Naive thymus-derived CD4-positive, alpha-beta T cell (primary cell): ENCODE measurements at regions of chr12 and their contacts with region 1.

Region 1: GRCh38 chr12:102119674-102120563 is at the starts of genes NUP37 and PARPBP:
- DNase-seq: peak; percentile 87 to 94 (median 91)
- ATAC-seq: peak; percentile 98
- H3K4me3 ChIP-seq: peak within 1 kb of the TSS; percentile 93
- H3K4me3 Mint-ChIP-seq: peak within 1 kb of the TSS; percentile 88 to 98 (median 93)
- H3K27ac ChIP-seq: peak within 1 kb of the TSS; percentile 91
- H3K27ac Mint-ChIP-seq: peak within 1 kb of the TSS; percentile 86 to 97 (median 92)
- H3K4me1 ChIP-seq: peaks cover 9 to 14% of the 10 kb centered on the region in 2 donors
- H3K4me1 Mint-ChIP-seq: peaks cover 14 to 49% (median 27%) of the 10 kb centered on the region in 7 donors
- H3K27me3 ChIP-seq: no peaks in the 10 kb centered on the region
- H3K27me3 Mint-ChIP-seq: no peaks in the 10 kb centered on the region
- total RNA-seq, gene NUP37: 11.9 to 47.5 (median 18.5) TPM
- total RNA-seq, gene PARPBP: 1.1 to 21.5 (median 1.5) TPM

Region 2: GRCh38 chr12:100200463-100201181 is 1919.3 kb before region 1 on chr12 and contains the start of gene ACTR6:
- CTCF ChIA-PET with region 1: no interaction called
- POLR2A ChIA-PET with region 1: no interaction called
- intact Hi-C with region 1: loop called (anchors 2 to 10 kb)
- DNase-seq: peak; percentile 91 to 99 (median 97)
- ATAC-seq: peak; percentile 93
- H3K4me3 ChIP-seq: peak within 1 kb of the TSS; percentile 84
- H3K4me3 Mint-ChIP-seq: peak within 1 kb of the TSS; percentile 95 to 99 (median 98)
- H3K27ac ChIP-seq: peak within 1 kb of the TSS; percentile 95
- H3K27ac Mint-ChIP-seq: peak within 1 kb of the TSS; percentile 98 to 100 (median 99)
- H3K4me1 ChIP-seq: peaks cover 10 to 27% of the 10 kb centered on the region in 2 donors
- H3K4me1 Mint-ChIP-seq: peaks cover 17 to 56% (median 44%) of the 10 kb centered on the region in 7 donors
- H3K27me3 ChIP-seq: no peaks in the 10 kb centered on the region
- H3K27me3 Mint-ChIP-seq: no peaks in the 10 kb centered on the region
- total RNA-seq, gene ACTR6: 24.1 to 46.8 (median 34.6) TPM

Region 3: DNA sequence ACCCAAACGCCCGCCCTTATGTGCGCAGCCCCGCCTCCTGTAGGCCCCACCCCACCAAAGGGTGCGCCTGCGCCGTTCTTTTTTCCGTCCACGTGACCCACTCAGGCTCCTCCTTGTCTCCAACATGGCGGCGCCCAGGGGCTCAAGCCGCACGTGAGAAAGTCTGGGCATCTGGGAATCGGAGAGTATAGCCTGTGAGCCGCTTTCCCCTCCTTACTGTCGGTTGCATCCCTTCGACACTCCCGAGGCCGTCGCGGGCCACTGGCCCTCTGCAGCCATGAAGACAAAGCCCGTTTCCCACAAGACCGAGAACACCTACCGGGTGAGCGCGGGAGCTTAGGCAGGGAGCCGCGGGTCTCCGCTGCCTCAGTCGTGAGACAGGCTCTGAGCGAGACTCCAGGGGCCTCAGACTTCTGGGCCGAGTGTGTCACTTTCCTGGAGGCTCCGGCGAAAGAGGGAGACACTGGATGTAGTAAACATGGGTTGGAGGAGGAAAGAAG is 839.9 kb before region 1 on chr12 and contains the start of gene UTP20:
- CTCF ChIA-PET with region 1: no interaction called
- POLR2A ChIA-PET with region 1: no interaction called
- intact Hi-C with region 1: loop called in 1 of 2 experiments (anchors 1 kb)
- DNase-seq: peak; percentile 90 to 94 (median 92)
- ATAC-seq: peak; percentile 100
- H3K4me3 ChIP-seq: peak within 1 kb of the TSS; percentile 72
- H3K4me3 Mint-ChIP-seq: peak within 1 kb of the TSS; percentile 92 to 97 (median 96)
- H3K27ac ChIP-seq: peak within 1 kb of the TSS; percentile 63
- H3K27ac Mint-ChIP-seq: peak within 1 kb of the TSS; percentile 77 to 94 (median 87)
- H3K4me1 ChIP-seq: peaks cover 5% of the 10 kb centered on the region in 2 donors
- H3K4me1 Mint-ChIP-seq: peaks cover 11 to 28% (median 16%) of the 10 kb centered on the region in 7 donors
- H3K27me3 ChIP-seq: no peaks in the 10 kb centered on the region
- H3K27me3 Mint-ChIP-seq: peaks cover 8 to 24% (median 16%) of the 10 kb centered on the region in 5 donors
- total RNA-seq, gene UTP20: 10.8 to 20.8 (median 14.9) TPM

Region 4: GRCh38 chr12:101799774-101800173 is 320.1 kb before region 1 on chr12:
- CTCF ChIA-PET with region 1: no interaction called
- POLR2A ChIA-PET with region 1: no interaction called
- intact Hi-C with region 1: no loop called
- DNase-seq: no peak
- ATAC-seq: no peak
- H3K4me3 ChIP-seq: no peak overlapping the region
- H3K4me3 Mint-ChIP-seq: peak overlapping the region in 1 of 10 donors; percentile 39
- H3K27ac ChIP-seq: no peak overlapping the region
- H3K27ac Mint-ChIP-seq: peak overlapping the region in 1 of 9 donors; percentile 68
- H3K4me1 ChIP-seq: peaks cover 0 to 3% of the 10 kb centered on the region in 2 donors
- H3K4me1 Mint-ChIP-seq: peaks cover 28 to 57% (median 41%) of the 10 kb centered on the region in 7 donors
- H3K27me3 ChIP-seq: no peaks in the 10 kb centered on the region
- H3K27me3 Mint-ChIP-seq: no peaks in the 10 kb centered on the region

Region 5: DNA sequence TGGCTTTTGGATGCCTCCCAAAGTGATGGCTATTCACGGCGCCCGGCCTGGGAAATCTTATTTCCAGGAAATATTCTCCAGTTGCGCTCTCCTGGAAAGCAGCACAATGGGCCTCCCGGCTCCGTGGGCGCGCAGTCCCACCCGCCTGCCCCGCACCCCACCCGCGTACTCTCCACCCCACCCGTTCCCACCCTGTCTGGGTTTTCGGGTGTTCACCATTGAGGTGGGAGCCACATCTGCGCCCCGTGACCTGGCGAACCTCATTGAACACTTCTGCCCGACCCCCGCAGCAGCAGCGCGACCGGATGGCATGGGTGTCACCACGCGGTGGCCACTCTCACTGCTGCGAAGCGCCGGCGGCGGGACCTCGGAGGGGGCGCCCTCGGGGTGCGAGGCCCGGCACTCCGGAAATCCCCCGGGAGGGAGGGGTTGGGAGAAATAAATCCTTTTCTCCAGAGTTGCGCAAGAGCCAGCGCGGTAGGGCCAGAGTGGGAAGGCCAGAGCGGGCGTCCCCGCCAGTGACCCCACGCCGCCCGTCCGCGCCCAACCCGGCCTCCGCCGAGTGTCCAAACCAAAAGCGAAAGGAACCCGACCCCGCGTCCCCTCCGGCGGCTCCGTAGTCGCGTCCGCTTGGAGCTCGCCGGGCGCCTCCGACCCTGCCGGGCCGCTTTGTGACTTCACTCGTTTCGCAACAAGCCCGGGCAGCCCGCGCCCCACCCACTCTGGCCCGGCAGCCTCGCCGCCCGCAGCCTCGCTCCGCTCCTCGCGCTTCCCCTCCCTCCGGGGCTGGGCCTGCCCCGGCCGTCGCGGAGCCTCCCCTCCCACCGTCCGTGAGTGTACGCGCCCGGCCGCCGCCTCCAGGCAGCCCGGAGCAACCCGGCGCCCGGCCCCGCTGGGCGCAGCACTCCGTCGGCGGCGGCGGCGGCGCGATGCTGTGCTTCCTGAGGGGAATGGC is 242.8 kb before region 1 on chr12 and contains the start of gene DRAM1:
- CTCF ChIA-PET with region 1: no interaction called
- POLR2A ChIA-PET with region 1: no interaction called
- intact Hi-C with region 1: loop called in 1 of 2 experiments (anchors 2 kb)
- DNase-seq: peak; percentile 45 to 85 (median 61)
- ATAC-seq: peak; percentile 93
- H3K4me3 ChIP-seq: peak within 1 kb of the TSS; percentile 56
- H3K4me3 Mint-ChIP-seq: peak within 1 kb of the TSS; percentile 80 to 95 (median 92)
- H3K27ac ChIP-seq: peak within 1 kb of the TSS; percentile 78
- H3K27ac Mint-ChIP-seq: peak within 1 kb of the TSS; percentile 73 to 90 (median 84)
- H3K4me1 ChIP-seq: peaks cover 0 to 6% of the 10 kb centered on the region in 2 donors
- H3K4me1 Mint-ChIP-seq: peaks cover 8 to 18% (median 12%) of the 10 kb centered on the region in 7 donors
- H3K27me3 ChIP-seq: no peaks in the 10 kb centered on the region
- H3K27me3 Mint-ChIP-seq: peaks cover 0 to 4% (median 0%) of the 10 kb centered on the region in 5 donors
- total RNA-seq, gene DRAM1: 2.4 to 9.5 (median 2.6) TPM

Region 6: GRCh38 chr12:102043928-102044327 is 76.0 kb before region 1 on chr12:
- CTCF ChIA-PET with region 1: no interaction called
- POLR2A ChIA-PET with region 1: no interaction called
- intact Hi-C with region 1: loop called in 1 of 2 experiments (anchors 1 kb)
- DNase-seq: peak in 8 of 9 donors; percentile 26 to 62 (median 42)
- ATAC-seq: peak; percentile 83
- H3K4me3 ChIP-seq: no peak overlapping the region
- H3K4me3 Mint-ChIP-seq: peak overlapping the region in 9 of 10 donors; percentile 22 to 79 (median 48)
- H3K27ac ChIP-seq: peak overlapping the region; percentile 42
- H3K27ac Mint-ChIP-seq: peak overlapping the region; percentile 16 to 85 (median 50)
- H3K4me1 ChIP-seq: peaks cover 0 to 12% of the 10 kb centered on the region in 2 donors
- H3K4me1 Mint-ChIP-seq: peaks cover 3 to 20% (median 16%) of the 10 kb centered on the region in 7 donors
- H3K27me3 ChIP-seq: no peaks in the 10 kb centered on the region
- H3K27me3 Mint-ChIP-seq: no peaks in the 10 kb centered on the region